ENCODE measurements at regions of chr3 and their contacts with region 1.

Region 1: GRCh38 chr3:112464264-112464663 is 35.0 kb downstream of the BTLA start:
- DNase-seq: no peak
- ATAC-seq: peak; percentile 62
- H3K4me3 Mint-ChIP-seq: peak overlapping the region; percentile 73
- H3K27ac Mint-ChIP-seq: peak overlapping the region; percentile 90
- H3K4me1 Mint-ChIP-seq: peaks cover 73% of the 10 kb centered on the region
- H3K27me3 Mint-ChIP-seq: no peaks in the 10 kb centered on the region

Region 2: DNA sequence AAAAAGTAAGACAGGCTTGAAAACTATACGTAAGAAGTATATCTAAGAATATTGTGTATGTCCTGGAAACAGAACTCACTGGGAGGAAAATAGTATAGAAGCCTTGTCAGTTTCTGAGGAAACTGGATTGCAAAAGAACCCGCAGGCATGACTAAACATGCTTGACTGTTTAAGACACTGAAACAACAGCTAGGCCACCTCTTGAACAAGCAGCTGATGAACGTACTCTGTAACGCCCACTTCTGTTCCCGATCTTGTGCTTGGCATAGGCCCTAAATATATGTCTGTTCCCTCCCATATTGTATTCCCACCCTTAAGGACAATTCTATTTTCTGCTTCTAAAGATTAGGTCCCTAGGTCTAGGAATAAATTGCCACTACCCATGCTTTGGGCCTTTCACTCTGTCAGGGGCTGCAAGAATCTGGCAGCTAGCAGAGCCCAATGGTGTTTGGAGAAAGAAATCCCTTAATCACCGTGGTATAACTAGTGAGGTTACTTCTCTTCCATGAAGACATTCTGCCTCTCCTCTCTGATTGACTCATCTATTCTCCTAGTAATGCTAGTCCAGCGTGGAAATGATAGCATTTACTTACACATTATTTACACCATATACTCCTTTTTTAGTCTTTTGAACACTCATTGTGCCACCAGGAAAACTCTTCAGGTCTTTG is 85.1 kb before region 1 on chr3:
- POLR2A ChIA-PET with region 1: no interaction called
- DNase-seq: no peak
- ATAC-seq: no peak
- H3K4me3 Mint-ChIP-seq: no peak overlapping the region
- H3K27ac Mint-ChIP-seq: no peak overlapping the region
- H3K4me1 Mint-ChIP-seq: peaks cover 6% of the 10 kb centered on the region
- H3K27me3 Mint-ChIP-seq: no peaks in the 10 kb centered on the region

Region 3: DNA sequence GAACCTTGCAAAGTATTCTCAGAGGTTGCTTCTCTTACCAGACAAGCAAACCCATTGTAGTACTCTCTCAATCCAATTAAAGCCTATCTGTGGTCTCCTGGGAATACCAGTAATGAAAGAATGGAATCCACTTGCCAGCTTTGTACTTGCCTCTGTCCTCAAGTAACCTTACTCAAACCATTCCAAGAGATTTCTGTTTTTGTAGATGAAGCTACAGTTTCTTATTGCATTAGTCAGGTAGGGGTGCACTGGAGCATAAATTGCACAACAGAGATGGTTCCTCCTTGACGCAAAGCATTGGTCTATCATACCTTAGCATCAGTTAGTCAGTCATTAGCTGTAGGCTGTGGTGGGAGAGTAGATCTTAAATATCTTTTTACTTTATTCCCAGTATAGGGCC is 17.9 kb before region 1 on chr3:
- POLR2A ChIA-PET with region 1: no interaction called
- DNase-seq: no peak
- ATAC-seq: no peak
- H3K4me3 Mint-ChIP-seq: no peak overlapping the region
- H3K27ac Mint-ChIP-seq: no peak overlapping the region
- H3K4me1 Mint-ChIP-seq: peaks cover 7% of the 10 kb centered on the region
- H3K27me3 Mint-ChIP-seq: no peaks in the 10 kb centered on the region

Region 4: DNA sequence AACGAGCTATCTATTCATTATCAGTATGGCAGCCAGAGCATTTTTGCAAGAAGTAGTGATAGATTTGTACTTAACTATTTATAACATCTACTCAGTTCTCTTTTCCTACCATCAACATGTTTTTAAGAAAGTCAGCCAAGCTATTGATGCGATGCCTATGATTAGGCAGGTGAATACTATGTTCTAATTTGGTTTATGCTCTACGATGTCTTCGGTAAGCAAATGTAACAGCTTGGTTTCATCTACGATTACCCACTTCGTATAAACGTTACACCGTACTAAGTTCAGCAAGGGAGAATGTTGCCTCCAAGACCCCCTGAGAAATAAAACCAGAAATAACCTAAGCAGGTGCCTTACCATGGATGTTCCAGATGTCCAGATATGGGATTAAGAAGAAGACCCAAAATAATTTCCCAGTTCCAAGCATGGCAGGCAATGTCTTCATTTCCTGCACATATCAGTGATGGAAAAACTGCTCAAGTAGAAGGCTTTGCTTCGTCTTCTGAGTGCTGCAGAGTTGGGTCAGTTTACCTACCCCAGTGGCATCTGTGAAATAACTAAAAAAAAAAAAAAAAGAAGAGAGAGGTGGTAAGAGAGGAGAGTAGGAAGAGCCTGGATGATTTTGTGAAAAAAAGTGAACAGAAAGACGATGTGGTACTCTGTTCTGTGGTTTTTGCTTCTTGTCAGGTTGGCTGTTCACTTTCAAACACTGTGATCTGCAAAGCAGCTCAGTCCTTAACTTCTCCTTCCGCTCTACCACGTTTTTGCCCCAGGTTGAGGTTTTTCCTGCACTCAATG is 34.8 kb after region 1 on chr3 and contains the start of gene BTLA:
- POLR2A ChIA-PET with region 1: interaction called, 15 read pairs
- DNase-seq: no peak
- ATAC-seq: peak; percentile 66
- H3K4me3 Mint-ChIP-seq: peak within 1 kb of the TSS; percentile 99
- H3K27ac Mint-ChIP-seq: peak within 1 kb of the TSS; percentile 95
- H3K4me1 Mint-ChIP-seq: peaks cover 41% of the 10 kb centered on the region
- H3K27me3 Mint-ChIP-seq: no peaks in the 10 kb centered on the region
- total RNA-seq, gene BTLA: 27.8 to 29.8 TPM

Region 5: DNA sequence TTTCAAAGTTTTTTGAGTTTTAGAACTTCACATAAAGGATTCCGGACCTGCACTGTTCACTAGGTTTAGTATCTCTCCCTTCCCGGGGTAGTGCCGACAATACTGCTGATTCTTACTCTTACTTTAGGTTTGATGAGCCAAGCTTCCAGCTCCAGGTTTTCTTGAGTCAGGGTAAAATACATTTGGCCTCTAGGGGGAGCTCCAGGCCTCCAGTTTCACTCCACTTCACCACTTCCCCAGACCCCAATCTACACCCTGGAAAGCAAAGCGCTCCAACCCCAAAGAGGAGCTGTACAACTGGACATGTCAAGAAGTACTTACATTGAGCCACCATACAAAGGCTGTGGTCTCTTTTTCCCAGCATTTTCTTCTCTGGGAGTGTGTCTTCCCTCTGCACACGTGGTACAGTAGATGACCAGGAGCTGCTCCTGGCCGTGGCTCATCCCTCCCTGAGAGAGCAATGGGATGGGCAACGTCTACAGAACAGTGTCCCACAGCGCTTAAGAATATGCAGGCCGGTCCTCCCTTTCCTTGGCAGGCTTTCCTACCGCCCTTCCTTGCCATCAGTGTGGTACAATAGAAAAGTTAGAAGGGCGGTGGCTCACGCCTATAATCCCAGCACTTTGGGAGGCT is 270.6 kb after region 1 on chr3:
- POLR2A ChIA-PET with region 1: no interaction called
- DNase-seq: peak; percentile 45
- ATAC-seq: peak; percentile 41
- H3K4me3 Mint-ChIP-seq: no peak overlapping the region
- H3K27ac Mint-ChIP-seq: no peak overlapping the region
- H3K4me1 Mint-ChIP-seq: peaks cover 37% of the 10 kb centered on the region
- H3K27me3 Mint-ChIP-seq: peaks cover 2% of the 10 kb centered on the region

Measured in activated naive CD8-positive, alpha-beta T cell treated with anti-CD3 and anti-CD28 coated beads, Interleukin-2, amount 10 ng/mL, durations not matched to agents 7 days and 5 days (primary cell).